ENCODE measurements at regions of chr4 and their contacts with region 1.

Region 1: DNA sequence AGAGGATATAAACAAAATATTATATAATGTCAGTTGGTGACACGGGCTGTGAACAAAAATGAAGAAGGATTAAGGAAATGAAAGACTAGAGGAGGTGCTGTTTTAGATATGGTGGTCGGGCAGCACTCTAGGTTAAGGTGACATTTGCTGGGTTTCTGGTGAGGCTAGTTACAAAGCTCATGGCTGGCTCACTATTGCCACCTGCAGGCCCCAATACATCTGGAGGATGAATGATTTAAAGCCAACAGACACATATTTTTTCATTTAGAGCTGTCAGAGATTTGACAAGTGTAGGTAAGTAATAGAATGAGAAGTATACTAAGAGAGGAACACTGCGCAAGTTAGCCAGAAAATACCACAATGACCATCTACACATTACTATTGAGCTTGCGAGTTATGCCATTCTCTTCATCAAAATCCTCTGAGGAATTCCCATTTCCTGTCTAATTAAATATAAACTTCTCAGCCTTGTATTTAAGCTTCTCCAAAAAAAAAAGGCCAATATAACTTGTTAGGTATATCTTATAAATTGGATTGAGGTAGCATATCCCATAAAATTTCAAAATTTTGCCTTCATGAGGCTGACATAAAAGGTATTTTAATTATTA is 6.4 kb upstream of the FGG start:
- DNase-seq: peak; percentile 74
- ATAC-seq: peak; percentile 68
- H3K4me3 ChIP-seq: no peak overlapping the region
- H3K4me3 Mint-ChIP-seq: no peak overlapping the region
- H3K27ac ChIP-seq: no peak overlapping the region
- H3K27ac Mint-ChIP-seq: no peak overlapping the region
- H3K4me1 ChIP-seq: peaks cover 11 to 13% of the 10 kb centered on the region in 2 donors
- H3K4me1 Mint-ChIP-seq: peaks cover 15% of the 10 kb centered on the region
- H3K27me3 ChIP-seq: no peaks in the 10 kb centered on the region
- H3K27me3 Mint-ChIP-seq: peaks cover 5% of the 10 kb centered on the region
- CTCF ChIP-seq: peak; percentile 69

Region 2: DNA sequence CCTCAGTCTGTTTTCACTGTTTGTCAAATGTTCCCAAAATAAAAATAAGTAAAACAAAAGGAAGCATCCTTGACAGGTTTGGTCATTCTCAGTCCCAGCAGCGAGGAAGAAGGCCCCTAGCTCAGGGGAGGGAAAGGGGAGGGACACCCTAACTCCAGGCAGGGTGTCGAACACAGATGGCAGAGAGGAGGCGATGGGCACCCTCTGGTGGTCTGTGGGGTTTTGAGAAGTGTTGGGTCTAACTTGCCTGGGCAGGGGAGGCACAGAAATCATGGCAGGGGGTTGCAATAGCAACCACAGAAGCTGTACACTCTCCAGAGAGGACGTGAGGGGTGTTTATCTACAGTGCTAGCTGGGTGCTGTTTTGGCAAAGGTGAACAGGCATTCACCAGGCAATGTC is 600.2 kb before region 1 on chr4:
- CTCF ChIA-PET with region 1: no interaction called
- POLR2A ChIA-PET with region 1: no interaction called
- intact Hi-C with region 1: no loop called
- DNase-seq: no peak
- ATAC-seq: no peak
- H3K4me3 ChIP-seq: no peak overlapping the region
- H3K4me3 Mint-ChIP-seq: no peak overlapping the region
- H3K27ac ChIP-seq: no peak overlapping the region
- H3K27ac Mint-ChIP-seq: no peak overlapping the region
- H3K4me1 ChIP-seq: no peaks in the 10 kb centered on the region
- H3K4me1 Mint-ChIP-seq: no peaks in the 10 kb centered on the region
- H3K27me3 ChIP-seq: peaks cover 0 to 4% (median 0%) of the 10 kb centered on the region in 4 experiments
- H3K27me3 Mint-ChIP-seq: peaks cover 6% of the 10 kb centered on the region
- CTCF ChIP-seq: no peak

Region 3: DNA sequence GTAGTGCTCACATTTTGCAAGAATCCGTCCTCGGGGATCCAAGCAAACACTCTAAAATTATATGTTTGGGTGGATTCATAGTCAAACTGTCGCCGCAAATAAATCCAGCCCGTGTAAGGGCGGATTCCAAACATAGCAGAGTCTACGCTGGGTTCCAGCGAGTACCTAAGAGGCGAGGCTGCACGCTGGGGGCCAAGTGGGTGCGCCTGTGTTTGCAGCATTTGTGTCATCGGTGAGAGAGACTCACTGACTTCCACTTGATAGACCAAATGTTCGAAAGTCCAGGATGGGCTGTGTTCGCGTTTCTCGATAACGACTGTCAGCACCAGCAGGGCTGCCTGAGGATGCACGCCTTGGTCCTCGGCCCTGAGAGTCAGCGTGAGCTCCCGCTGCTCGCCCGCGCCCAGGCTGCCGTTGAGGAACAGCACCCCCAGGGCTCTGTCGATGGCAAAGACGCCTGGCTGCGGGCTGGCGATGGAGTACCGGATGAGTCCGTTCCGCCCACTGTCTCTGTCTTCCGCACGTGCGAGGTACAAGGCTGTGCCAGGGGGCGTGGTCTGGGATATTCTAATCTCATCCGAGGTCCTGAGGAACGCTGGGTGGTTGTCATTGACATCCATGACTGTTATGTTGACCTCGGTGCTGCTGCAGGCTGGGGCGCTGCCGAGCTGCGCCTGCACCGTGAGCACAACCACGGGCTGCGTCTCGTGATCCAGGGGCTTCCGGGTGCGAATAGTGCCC is 286.0 kb before region 1 on chr4:
- CTCF ChIA-PET with region 1: interaction called, 5 read pairs
- POLR2A ChIA-PET with region 1: no interaction called
- intact Hi-C with region 1: loop called (anchors 5 kb)
- DNase-seq: peak; percentile 81
- ATAC-seq: peak; percentile 83
- H3K4me3 ChIP-seq: peak overlapping the region; percentile 19 to 70 (median 51)
- H3K4me3 Mint-ChIP-seq: peak overlapping the region; percentile 90
- H3K27ac ChIP-seq: peak overlapping the region in 1 of 2 donors; percentile 9
- H3K27ac Mint-ChIP-seq: peak overlapping the region; percentile 66
- H3K4me1 ChIP-seq: peaks cover 7 to 13% of the 10 kb centered on the region in 2 donors
- H3K4me1 Mint-ChIP-seq: peaks cover 13% of the 10 kb centered on the region
- H3K27me3 ChIP-seq: peaks cover 0 to 15% (median 3%) of the 10 kb centered on the region in 4 experiments
- H3K27me3 Mint-ChIP-seq: peaks cover 23% of the 10 kb centered on the region
- CTCF ChIP-seq: peak; percentile 33

Region 4: DNA sequence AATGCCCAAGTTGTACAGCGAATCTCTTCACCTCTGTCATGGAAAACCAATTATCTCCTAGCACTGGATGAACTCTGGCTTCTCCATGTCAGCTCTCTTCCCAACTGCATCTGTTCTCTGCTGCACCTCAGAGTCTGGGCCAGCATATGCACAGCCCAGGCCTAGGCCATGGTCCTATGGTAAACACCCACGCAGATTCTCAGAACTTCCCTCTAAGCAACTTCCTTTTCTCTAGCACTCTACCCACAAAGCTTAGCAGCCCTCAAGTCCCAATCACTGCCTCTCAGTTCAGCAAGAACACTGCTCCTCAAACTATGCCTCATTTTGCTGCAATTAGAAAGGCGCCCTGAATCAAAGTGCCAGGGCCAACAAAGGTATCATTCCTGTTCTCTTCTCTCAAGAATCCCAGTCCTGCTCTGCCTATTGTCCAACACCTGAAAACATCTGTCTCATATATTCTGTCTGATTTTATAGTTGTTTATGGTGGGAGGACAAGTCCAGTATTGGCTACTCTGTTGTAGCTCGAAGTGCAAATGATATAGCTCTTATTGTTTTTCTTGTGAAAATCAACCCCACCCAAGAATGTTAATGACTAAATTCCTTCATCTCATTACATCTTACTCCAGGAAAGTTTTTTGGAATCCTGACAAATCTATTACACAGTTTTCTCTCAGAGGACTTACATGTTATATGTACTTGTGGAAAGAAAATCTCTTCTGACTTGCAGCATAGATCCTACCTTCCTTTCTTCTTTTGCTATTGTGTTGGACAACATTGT is 212.6 kb before region 1 on chr4:
- CTCF ChIA-PET with region 1: no interaction called
- POLR2A ChIA-PET with region 1: no interaction called
- intact Hi-C with region 1: no loop called
- DNase-seq: peak; percentile 61
- ATAC-seq: peak; percentile 84
- H3K4me3 ChIP-seq: no peak overlapping the region
- H3K4me3 Mint-ChIP-seq: no peak overlapping the region
- H3K27ac ChIP-seq: peak overlapping the region in 1 of 2 donors; percentile 57
- H3K27ac Mint-ChIP-seq: peak overlapping the region; percentile 75
- H3K4me1 ChIP-seq: peaks cover 22 to 24% of the 10 kb centered on the region in 2 donors
- H3K4me1 Mint-ChIP-seq: peaks cover 21% of the 10 kb centered on the region
- H3K27me3 ChIP-seq: peaks cover 0 to 8% (median 0%) of the 10 kb centered on the region in 4 experiments
- H3K27me3 Mint-ChIP-seq: peaks cover 3% of the 10 kb centered on the region
- CTCF ChIP-seq: no peak

Region 5: GRCh38 chr4:154526151-154526550 is 92.7 kb before region 1 on chr4:
- CTCF ChIA-PET with region 1: no interaction called
- POLR2A ChIA-PET with region 1: no interaction called
- intact Hi-C with region 1: no loop called
- DNase-seq: peak; percentile 12
- ATAC-seq: no peak
- H3K4me3 ChIP-seq: no peak overlapping the region
- H3K4me3 Mint-ChIP-seq: no peak overlapping the region
- H3K27ac ChIP-seq: no peak overlapping the region
- H3K27ac Mint-ChIP-seq: no peak overlapping the region
- H3K4me1 ChIP-seq: no peaks in the 10 kb centered on the region
- H3K4me1 Mint-ChIP-seq: peaks cover 2% of the 10 kb centered on the region
- H3K27me3 ChIP-seq: peaks cover 0 to 10% (median 3%) of the 10 kb centered on the region in 4 experiments
- H3K27me3 Mint-ChIP-seq: peaks cover 39% of the 10 kb centered on the region
- CTCF ChIP-seq: no peak

Region 6: GRCh38 chr4:154551872-154552686 is 66.7 kb before region 1 on chr4:
- CTCF ChIA-PET with region 1: interaction called, 357 read pairs
- POLR2A ChIA-PET with region 1: interaction called, 3 read pairs
- intact Hi-C with region 1: loop called (anchors 1 kb)
- DNase-seq: peak; percentile 80
- ATAC-seq: peak; percentile 54
- H3K4me3 ChIP-seq: no peak overlapping the region
- H3K4me3 Mint-ChIP-seq: no peak overlapping the region
- H3K27ac ChIP-seq: no peak overlapping the region
- H3K27ac Mint-ChIP-seq: no peak overlapping the region
- H3K4me1 ChIP-seq: peaks cover 18% of the 10 kb centered on the region in 2 donors
- H3K4me1 Mint-ChIP-seq: peaks cover 21% of the 10 kb centered on the region
- H3K27me3 ChIP-seq: no peaks in the 10 kb centered on the region
- H3K27me3 Mint-ChIP-seq: no peaks in the 10 kb centered on the region
- CTCF ChIP-seq: peak; percentile 94

Region 7: DNA sequence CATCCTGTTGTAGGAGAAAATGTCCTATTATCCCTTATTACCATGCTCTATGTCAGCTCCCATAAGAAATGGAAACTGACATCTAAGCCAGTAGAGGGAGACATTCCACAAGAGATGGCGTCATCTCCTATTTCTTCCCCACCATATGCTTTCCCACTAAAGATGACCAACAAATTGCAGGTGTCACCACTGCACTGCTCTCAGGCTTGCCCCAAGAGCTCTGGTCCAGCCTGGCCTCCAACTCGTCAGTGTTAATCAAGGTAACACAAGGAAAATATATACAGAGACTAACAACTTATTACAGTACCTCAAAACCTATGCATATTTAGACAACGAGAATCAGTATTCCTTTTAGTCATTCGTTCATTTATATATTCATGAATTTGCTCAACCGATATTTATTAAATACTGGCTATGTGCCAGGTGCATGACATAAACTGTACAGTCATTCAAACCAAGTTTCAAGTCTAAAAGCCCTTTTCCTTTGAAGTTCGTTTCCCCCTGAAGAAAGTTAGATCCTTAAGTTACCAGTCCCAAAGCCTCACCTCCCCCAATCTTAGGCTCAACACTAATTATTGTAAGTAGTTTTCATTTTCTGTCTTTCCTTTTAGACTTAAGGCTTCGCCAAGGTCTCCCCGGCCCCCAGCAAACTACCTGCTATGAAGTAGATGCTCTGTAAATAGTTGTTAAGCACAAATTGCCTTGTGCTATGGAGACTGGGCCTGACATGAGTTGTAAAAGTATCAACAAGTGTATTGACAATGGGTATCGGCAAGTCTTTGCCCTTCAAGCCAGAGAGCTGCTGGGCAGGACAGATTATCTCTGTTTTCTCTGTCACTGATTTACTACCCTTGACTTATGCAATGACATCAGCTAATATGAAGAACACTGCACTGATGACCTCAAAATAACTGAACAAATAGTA is 59.1 kb before region 1 on chr4:
- CTCF ChIA-PET with region 1: interaction called, 357 read pairs
- POLR2A ChIA-PET with region 1: no interaction called
- intact Hi-C with region 1: loop called (anchors 1 kb)
- DNase-seq: peak; percentile 44
- ATAC-seq: peak; percentile 33
- H3K4me3 ChIP-seq: no peak overlapping the region
- H3K4me3 Mint-ChIP-seq: no peak overlapping the region
- H3K27ac ChIP-seq: no peak overlapping the region
- H3K27ac Mint-ChIP-seq: no peak overlapping the region
- H3K4me1 ChIP-seq: no peaks in the 10 kb centered on the region
- H3K4me1 Mint-ChIP-seq: no peaks in the 10 kb centered on the region
- H3K27me3 ChIP-seq: peaks cover 0 to 2% (median 0%) of the 10 kb centered on the region in 4 experiments
- H3K27me3 Mint-ChIP-seq: peaks cover 3% of the 10 kb centered on the region
- CTCF ChIP-seq: peak; percentile 38

Region 8: DNA sequence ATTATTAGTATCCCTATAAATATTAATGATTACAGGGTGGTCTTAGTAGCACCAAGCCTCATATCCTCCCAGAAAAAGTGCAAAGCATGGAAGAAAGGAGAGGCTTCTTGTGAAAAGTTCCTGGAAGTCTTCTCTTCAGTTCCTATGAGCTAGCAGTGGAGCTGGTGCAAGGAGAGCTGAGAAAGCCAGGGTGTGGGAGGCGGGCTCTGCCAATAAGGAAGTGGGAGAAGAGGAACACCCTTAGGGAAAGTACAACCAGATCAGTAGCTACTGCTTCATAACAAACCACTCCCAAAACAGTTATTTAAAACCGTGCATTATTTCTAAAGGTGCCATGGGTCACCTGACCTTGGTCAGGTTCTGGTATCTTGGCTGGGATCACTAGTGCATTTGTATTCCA is 685.6 kb after region 1 on chr4:
- CTCF ChIA-PET with region 1: no interaction called
- POLR2A ChIA-PET with region 1: no interaction called
- intact Hi-C with region 1: no loop called
- DNase-seq: no peak
- ATAC-seq: no peak
- H3K4me3 ChIP-seq: no peak overlapping the region
- H3K4me3 Mint-ChIP-seq: no peak overlapping the region
- H3K27ac ChIP-seq: no peak overlapping the region
- H3K27ac Mint-ChIP-seq: no peak overlapping the region
- H3K4me1 ChIP-seq: no peaks in the 10 kb centered on the region
- H3K4me1 Mint-ChIP-seq: no peaks in the 10 kb centered on the region
- H3K27me3 ChIP-seq: no peaks in the 10 kb centered on the region
- H3K27me3 Mint-ChIP-seq: no peaks in the 10 kb centered on the region
- CTCF ChIP-seq: no peak

Region 9: GRCh38 chr4:155376387-155377268 is 757.8 kb after region 1 on chr4 and contains the start of gene MAP9:
- CTCF ChIA-PET with region 1: no interaction called
- POLR2A ChIA-PET with region 1: no interaction called
- intact Hi-C with region 1: loop called (anchors 5 kb)
- DNase-seq: peak; percentile 98
- ATAC-seq: peak; percentile 90
- H3K4me3 ChIP-seq: peak within 1 kb of the TSS; percentile 4 to 80 (median 75)
- H3K4me3 Mint-ChIP-seq: peak within 1 kb of the TSS; percentile 95
- H3K27ac ChIP-seq: peak within 1 kb of the TSS; percentile 78 to 91
- H3K27ac Mint-ChIP-seq: peak within 1 kb of the TSS; percentile 96
- H3K4me1 ChIP-seq: peaks cover 4 to 8% of the 10 kb centered on the region in 2 donors
- H3K4me1 Mint-ChIP-seq: peaks cover 15% of the 10 kb centered on the region
- H3K27me3 ChIP-seq: no peaks in the 10 kb centered on the region
- H3K27me3 Mint-ChIP-seq: no peaks in the 10 kb centered on the region
- CTCF ChIP-seq: no peak
- total RNA-seq, gene MAP9: 16.3 and 19.1 TPM in 2 replicates

Measured in B cell (primary cell).